ENCODE measurements at regions of chr17 and their contacts with region 1.

Region 1: DNA sequence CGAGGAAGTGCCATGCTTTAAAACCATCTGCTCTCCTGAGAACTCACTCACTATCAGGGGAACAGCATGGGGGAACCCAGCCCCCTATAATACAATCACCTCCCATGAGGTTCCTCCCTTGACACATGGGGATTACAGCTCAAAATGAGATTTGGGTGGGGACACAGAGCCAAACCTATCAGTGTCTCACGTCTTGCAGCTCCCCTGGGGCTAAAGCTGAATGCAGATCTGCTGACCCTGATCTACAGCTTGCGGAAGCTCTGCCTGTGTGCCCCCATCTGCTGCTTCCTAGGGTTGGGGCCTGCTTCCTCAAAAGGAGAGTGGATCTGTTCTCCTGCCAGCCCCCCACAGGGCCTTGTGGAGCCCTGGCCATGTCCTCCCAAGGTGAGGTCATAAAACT is 16.2 kb downstream of the KRT33A start:
- DNase-seq: no peak
- H3K4me3 ChIP-seq: no peak overlapping the region
- H3K27me3 ChIP-seq: no peaks in the 10 kb centered on the region
- CTCF ChIP-seq: no peak

Region 2: DNA sequence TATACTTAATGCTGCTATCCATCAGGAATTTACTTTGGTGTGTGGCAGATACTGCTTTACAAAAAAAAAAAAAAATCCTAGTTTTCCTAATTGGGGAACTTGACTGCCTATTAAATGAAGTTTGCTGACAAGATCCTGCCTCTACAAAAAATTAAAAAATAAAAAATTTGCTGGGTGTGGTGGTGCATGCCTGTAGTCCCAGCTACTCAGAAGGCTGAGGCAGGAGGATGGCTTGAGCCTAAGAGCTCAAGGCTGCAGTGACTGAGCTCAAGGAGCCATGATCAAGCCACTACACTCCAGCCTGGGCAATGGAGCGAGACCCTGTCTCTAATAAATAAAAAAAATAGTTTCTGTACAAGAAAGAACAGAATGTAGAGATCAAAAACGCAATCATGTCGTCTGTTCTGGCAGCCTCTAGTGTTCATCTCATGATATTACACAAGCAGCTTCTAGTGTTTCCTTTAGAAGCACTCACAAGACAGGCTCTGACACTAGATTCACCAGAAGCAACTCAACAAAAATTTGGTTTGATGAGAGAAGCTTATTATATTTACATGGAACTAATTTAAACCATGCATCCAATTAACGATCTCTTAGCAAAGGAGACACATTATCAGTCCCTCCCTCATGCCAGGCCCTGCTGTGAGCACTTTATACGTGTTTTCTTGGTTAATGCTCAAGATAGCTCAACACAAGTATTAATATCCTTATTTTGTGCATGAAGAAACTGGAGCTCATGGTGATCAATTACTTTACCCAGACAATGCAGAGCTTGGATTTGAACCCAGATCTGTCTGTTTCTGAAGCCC is 12.1 kb before region 1 on chr17:
- CTCF ChIA-PET with region 1: interaction called, 18 read pairs
- POLR2A ChIA-PET with region 1: no interaction called
- DNase-seq: peak; percentile 38
- H3K4me3 ChIP-seq: no peak overlapping the region
- H3K27me3 ChIP-seq: no peaks in the 10 kb centered on the region
- CTCF ChIP-seq: peak; percentile 91

Measured in BJ (cell line).